Endothelial cell of umbilical vein (primary cell): ENCODE measurements at regions of chr6 and their contacts with region 1.

Region 1: GRCh38 chr6:95601133-95601532 is 23.8 kb downstream of the MANEA start:
- DNase-seq: peak; percentile 61
- H3K4me3 ChIP-seq: no peak overlapping the region
- H3K27ac ChIP-seq: peak overlapping the region; percentile 17
- H3K4me1 ChIP-seq: peaks cover 21% of the 10 kb centered on the region
- H3K27me3 ChIP-seq: no peaks in the 10 kb centered on the region
- CTCF ChIP-seq: no peak
- POLR2A ChIP-seq: no peak

Region 2: DNA sequence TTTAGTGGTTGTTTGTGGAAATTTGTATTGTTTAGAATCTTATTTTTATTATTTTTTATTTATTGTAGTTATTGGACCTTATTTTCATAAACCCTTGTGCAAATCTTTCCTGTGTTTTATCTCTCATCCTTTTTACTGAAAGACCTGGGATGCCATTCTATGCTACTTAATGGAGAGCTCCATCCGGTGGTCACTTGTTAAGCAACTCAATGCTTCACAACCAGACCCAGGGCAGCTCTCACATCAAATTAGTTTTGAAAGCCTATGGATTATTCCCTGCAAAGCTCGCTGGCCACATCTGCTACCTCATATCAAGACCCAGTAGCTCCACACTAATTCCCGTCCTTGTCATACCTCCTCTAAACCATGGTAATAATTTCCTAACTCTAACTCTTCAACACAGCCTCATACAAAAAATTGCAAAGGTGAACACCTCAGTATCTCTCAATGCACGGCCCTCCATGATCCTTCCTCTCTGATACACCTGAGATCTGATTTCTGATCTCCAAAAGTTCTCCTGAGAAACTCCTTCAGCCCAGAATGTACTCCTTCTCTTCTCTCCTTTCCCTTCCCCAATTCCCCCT is 320.4 kb before region 1 on chr6:
- CTCF ChIA-PET with region 1: no interaction called
- POLR2A ChIA-PET with region 1: no interaction called
- dilution Hi-C with region 1: no loop called
- intact Hi-C with region 1: no loop called
- DNase-seq: no peak
- H3K4me3 ChIP-seq: no peak overlapping the region
- H3K27ac ChIP-seq: no peak overlapping the region
- H3K4me1 ChIP-seq: no peaks in the 10 kb centered on the region
- H3K27me3 ChIP-seq: no peaks in the 10 kb centered on the region
- CTCF ChIP-seq: no peak
- POLR2A ChIP-seq: no peak

Region 3: GRCh38 chr6:95577304-95578105 is 23.6 kb before region 1 on chr6 and contains the start of gene MANEA:
- CTCF ChIA-PET with region 1: interaction called, 3 read pairs
- POLR2A ChIA-PET with region 1: no interaction called
- dilution Hi-C with region 1: no loop called
- intact Hi-C with region 1: loop called (anchors 1 kb)
- DNase-seq: peak; percentile 84
- H3K4me3 ChIP-seq: peak within 1 kb of the TSS; percentile 57 to 100 (median 98)
- H3K27ac ChIP-seq: peak within 1 kb of the TSS; percentile 86
- H3K4me1 ChIP-seq: peaks cover 30% of the 10 kb centered on the region
- H3K27me3 ChIP-seq: no peaks in the 10 kb centered on the region
- CTCF ChIP-seq: peak in 1 of 2 donors; percentile 0
- POLR2A ChIP-seq: peak; percentile 77
- total RNA-seq, gene MANEA: 17.7 and 18.5 TPM in 2 replicates

Region 4: GRCh38 chr6:96466147-96466863 is 865.2 kb after region 1 on chr6:
- CTCF ChIA-PET with region 1: no interaction called
- POLR2A ChIA-PET with region 1: no interaction called
- dilution Hi-C with region 1: no loop called
- intact Hi-C with region 1: no loop called
- DNase-seq: no peak
- H3K4me3 ChIP-seq: no peak overlapping the region
- H3K27ac ChIP-seq: no peak overlapping the region
- H3K4me1 ChIP-seq: no peaks in the 10 kb centered on the region
- H3K27me3 ChIP-seq: no peaks in the 10 kb centered on the region
- CTCF ChIP-seq: no peak
- POLR2A ChIP-seq: no peak

Region 5: GRCh38 chr6:96563853-96564252 is 962.7 kb after region 1 on chr6:
- CTCF ChIA-PET with region 1: no interaction called
- POLR2A ChIA-PET with region 1: no interaction called
- dilution Hi-C with region 1: no loop called
- intact Hi-C with region 1: no loop called
- DNase-seq: no peak
- H3K4me3 ChIP-seq: no peak overlapping the region
- H3K27ac ChIP-seq: no peak overlapping the region
- H3K4me1 ChIP-seq: no peaks in the 10 kb centered on the region
- H3K27me3 ChIP-seq: no peaks in the 10 kb centered on the region
- CTCF ChIP-seq: no peak
- POLR2A ChIP-seq: no peak